HEK293 (cell line): ENCODE measurements at regions of chr6 and their contacts with region 1.

Region 1: DNA sequence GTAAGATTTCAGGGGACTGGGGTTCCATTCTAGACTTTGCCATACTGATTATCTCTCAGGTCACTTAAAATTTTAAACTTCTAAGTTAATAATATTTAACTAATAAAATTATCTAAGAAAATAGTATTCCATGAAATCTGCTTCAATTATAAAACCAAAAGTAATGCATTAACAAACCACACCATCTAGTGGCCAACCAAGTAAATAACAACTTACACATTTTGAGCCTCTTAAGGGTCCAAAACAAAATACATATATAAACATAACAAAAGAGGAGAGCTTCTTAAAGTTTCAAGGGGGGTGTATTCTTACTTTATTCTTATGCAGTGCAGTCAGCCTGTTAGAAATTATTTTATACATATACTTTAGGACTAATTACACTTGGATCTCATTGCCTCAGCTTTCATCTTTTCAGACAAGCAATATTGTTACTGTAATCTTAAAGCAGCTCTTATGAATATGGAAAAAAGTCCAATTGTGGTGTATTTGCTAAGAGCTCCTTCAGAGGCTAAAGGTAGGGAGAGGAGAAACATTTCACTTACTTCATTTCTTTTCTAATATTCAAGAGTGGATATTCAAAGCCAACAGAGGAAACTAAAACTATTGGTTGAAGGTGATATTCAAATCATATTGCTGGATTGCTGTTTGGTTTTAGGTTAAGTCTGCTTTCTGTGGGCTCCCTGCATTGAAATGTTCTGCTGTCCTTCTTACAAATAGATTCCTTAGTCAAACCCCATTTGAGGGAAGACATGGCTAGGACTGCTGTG is 199.7 kb upstream of the SIM1 start:
- H3K4me3 ChIP-seq: no peak overlapping the region
- H3K27ac ChIP-seq: no peak overlapping the region
- H3K4me1 ChIP-seq: no peaks in the 10 kb centered on the region
- CTCF ChIP-seq: no peak

Region 2: GRCh38 chr6:100479179-100480035 is 185.1 kb before region 1 on chr6:
- CTCF ChIA-PET with region 1: interaction called, 10 read pairs
- POLR2A ChIA-PET with region 1: no interaction called
- H3K4me3 ChIP-seq: no peak overlapping the region
- H3K27ac ChIP-seq: no peak overlapping the region
- H3K4me1 ChIP-seq: no peaks in the 10 kb centered on the region
- CTCF ChIP-seq: peak; percentile 53; the same call in 1 of the 2 replicates

Region 3: DNA sequence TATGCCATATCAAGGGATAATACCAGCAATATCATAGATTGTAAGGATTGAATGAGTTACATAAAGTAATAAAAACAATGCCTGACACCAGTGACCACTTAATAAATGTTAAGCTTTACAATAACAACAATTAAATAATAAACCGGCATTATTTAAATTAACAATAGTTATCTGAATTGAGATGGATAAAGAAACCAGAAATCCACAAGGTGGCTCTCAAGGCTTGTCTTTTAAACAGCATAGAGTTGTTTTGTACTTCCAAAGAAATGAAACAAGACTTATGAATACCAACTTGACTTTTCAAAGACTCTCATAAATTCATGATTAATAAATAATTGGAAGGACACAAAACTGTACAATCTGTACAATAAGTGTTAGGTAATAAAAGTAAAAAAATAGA is 13.6 kb after region 1 on chr6:
- CTCF ChIA-PET with region 1: interaction called, 41 read pairs
- POLR2A ChIA-PET with region 1: no interaction called
- H3K4me3 ChIP-seq: no peak overlapping the region
- H3K27ac ChIP-seq: no peak overlapping the region
- H3K4me1 ChIP-seq: no peaks in the 10 kb centered on the region
- CTCF ChIP-seq: no peak

Region 4: DNA sequence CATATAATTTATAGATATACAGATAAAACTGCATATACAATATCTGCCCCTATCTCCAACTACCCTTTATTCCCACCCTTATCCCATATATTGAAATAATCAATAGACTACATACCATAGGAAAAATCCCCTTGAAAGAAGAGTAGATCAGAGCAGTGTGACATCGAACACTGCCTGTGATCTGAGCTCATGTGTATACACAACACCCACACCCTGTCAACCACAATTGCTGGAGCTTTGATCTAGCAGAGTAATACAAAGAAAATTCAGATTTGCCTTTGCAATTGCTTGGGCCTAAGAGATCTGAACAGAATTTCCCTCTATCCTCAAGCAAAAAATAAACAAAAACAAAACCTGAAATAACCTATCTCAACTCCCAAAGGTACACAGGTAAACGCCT is 97.4 kb after region 1 on chr6:
- CTCF ChIA-PET with region 1: no interaction called
- POLR2A ChIA-PET with region 1: no interaction called
- H3K4me3 ChIP-seq: no peak overlapping the region
- H3K27ac ChIP-seq: no peak overlapping the region
- H3K4me1 ChIP-seq: no peaks in the 10 kb centered on the region
- CTCF ChIP-seq: no peak